Brain microvascular endothelial cell (primary cell): ENCODE measurements at regions of chr4 and their contacts with region 1.

Region 1: DNA sequence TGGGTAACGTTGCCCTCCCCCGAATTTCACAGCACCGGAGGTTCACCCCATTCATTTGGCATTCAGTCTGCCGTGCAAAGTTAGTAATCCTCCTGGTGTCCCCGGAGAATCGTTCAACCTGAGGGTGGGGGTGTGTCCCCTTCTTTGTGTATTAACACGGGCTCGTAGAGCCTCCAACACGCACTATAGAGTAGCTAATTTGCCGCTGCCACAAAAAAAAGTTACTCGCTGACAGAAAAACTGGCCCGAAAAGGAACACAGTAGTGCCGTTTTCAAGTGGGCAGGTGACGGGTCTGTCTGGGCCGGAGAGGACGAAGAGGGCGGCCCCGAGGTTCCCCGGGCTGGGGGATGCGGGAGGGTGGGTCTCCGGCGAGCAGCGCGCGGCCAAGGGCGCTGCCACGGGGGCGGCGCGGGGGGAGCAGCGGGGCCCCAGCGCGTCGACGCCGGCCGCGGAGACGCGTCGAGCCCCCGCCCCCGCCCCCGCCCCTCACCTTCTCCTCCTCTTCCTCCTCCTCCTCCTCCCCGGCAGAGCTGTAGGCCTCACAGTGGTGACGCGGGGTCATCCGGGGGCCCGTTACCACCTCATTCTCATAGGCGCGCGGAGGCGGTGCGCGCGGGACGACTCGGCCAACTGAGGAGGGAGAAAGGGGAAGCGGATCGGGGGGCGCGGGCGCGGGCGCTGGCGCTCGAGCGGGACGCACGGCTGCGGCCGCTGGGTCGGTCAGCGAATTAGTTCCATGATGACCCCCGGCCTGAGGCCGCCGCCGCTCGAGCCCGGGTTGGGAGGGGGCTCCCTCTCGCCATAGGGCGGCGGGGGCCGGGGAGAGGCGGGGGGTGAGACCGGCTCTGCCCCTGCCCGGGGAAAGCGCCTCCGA is 571 bp downstream of the CCNI start:
- DNase-seq: peak; percentile 57
- H3K4me3 ChIP-seq: peak overlapping the region; percentile 81
- H3K27ac ChIP-seq: peak overlapping the region; percentile 100
- H3K27me3 ChIP-seq: no peaks in the 10 kb centered on the region
- CTCF ChIP-seq: no peak

Region 2: GRCh38 chr4:76867880-76868655 is 207.2 kb before region 1 on chr4:
- in situ Hi-C with region 1: no loop called
- DNase-seq: no peak
- H3K4me3 ChIP-seq: no peak overlapping the region
- H3K27ac ChIP-seq: no peak overlapping the region
- H3K27me3 ChIP-seq: no peaks in the 10 kb centered on the region
- CTCF ChIP-seq: no peak

Region 3: GRCh38 chr4:76949276-76950051 is 125.8 kb before region 1 on chr4 and contains the start of gene SEPTIN11:
- in situ Hi-C with region 1: loop called (anchors 25 kb)
- DNase-seq: peak; percentile 91
- H3K4me3 ChIP-seq: peak within 1 kb of the TSS; percentile 93
- H3K27ac ChIP-seq: peak within 1 kb of the TSS; percentile 82
- H3K27me3 ChIP-seq: no peaks in the 10 kb centered on the region
- CTCF ChIP-seq: no peak